Caco-2 (cell line): ENCODE measurements at regions of chr7 and their contacts with region 1.

Region 1: GRCh38 chr7:144670218-144670617 is 165.6 kb downstream of the TPK1 start:
- DNase-seq: peak in 1 of 2 experiments; percentile 11
- H3K4me3 ChIP-seq: no peak overlapping the region
- H3K4me3 Mint-ChIP-seq: no peak overlapping the region
- H3K27ac Mint-ChIP-seq: no peak overlapping the region
- H3K4me1 ChIP-seq: no peaks in the 10 kb centered on the region
- H3K4me1 Mint-ChIP-seq: peaks cover 4% of the 10 kb centered on the region
- H3K27me3 ChIP-seq: no peaks in the 10 kb centered on the region
- H3K27me3 Mint-ChIP-seq: no peaks in the 10 kb centered on the region
- CTCF ChIP-seq: peak; percentile 13 to 33

Region 2: DNA sequence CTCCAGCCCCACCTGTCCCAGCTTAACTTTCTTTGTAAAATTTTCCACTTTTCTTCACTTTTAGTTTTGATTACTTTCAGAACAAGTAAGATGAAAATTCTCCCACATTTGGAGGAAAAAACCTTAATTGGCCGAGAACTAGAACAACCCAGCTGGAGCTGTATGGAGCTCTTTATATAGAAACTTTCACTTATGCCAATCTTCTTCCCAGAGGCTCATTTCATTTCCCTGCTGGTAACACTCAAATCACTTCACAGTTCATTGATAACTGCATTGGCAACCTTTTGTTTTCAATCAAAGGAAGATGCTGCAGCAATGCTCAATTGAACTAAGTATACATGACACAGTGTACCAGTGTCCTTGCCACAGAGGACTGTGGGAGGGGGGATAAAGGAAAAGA is 90.5 kb before region 1 on chr7:
- CTCF ChIA-PET with region 1: no interaction called
- POLR2A ChIA-PET with region 1: no interaction called
- intact Hi-C with region 1: no loop called
- DNase-seq: no peak
- H3K4me3 ChIP-seq: no peak overlapping the region
- H3K4me3 Mint-ChIP-seq: no peak overlapping the region
- H3K27ac Mint-ChIP-seq: no peak overlapping the region
- H3K4me1 ChIP-seq: no peaks in the 10 kb centered on the region
- H3K4me1 Mint-ChIP-seq: no peaks in the 10 kb centered on the region
- H3K27me3 ChIP-seq: no peaks in the 10 kb centered on the region
- H3K27me3 Mint-ChIP-seq: no peaks in the 10 kb centered on the region
- CTCF ChIP-seq: no peak

Region 3: DNA sequence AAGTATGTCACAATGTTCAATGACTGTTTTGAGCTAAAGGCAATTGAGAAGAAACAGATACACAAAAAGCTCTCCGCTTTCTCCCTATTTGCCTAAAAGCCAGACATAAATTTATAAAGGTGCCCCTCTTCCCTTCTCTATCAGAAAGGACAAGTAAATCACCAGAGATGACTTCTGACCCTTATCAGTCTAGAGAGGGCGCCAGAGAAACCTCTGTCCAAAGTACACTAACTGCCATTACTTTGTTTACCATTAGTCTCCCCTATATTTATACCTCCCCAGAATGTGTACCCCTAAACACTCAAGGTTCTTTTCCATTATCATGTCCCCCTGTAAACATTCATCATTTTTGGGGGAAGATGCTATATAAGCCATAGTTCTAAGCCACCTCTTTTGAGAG is 116.3 kb after region 1 on chr7:
- CTCF ChIA-PET with region 1: interaction called, 4 read pairs
- POLR2A ChIA-PET with region 1: no interaction called
- intact Hi-C with region 1: loop called (anchors 2 kb)
- DNase-seq: no peak
- H3K4me3 ChIP-seq: no peak overlapping the region
- H3K4me3 Mint-ChIP-seq: no peak overlapping the region
- H3K27ac Mint-ChIP-seq: no peak overlapping the region
- H3K4me1 ChIP-seq: peaks cover 22% of the 10 kb centered on the region
- H3K4me1 Mint-ChIP-seq: peaks cover 6% of the 10 kb centered on the region
- H3K27me3 ChIP-seq: no peaks in the 10 kb centered on the region
- H3K27me3 Mint-ChIP-seq: no peaks in the 10 kb centered on the region
- CTCF ChIP-seq: peak; percentile 6 to 10

Region 4: GRCh38 chr7:145016068-145016467 is 345.9 kb after region 1 on chr7:
- CTCF ChIA-PET with region 1: no interaction called
- POLR2A ChIA-PET with region 1: no interaction called
- intact Hi-C with region 1: loop called (anchors 10 kb)
- DNase-seq: peak; percentile 24 to 38
- H3K4me3 ChIP-seq: no peak overlapping the region
- H3K4me3 Mint-ChIP-seq: peak overlapping the region; percentile 41
- H3K27ac Mint-ChIP-seq: no peak overlapping the region
- H3K4me1 ChIP-seq: no peaks in the 10 kb centered on the region
- H3K4me1 Mint-ChIP-seq: no peaks in the 10 kb centered on the region
- H3K27me3 ChIP-seq: no peaks in the 10 kb centered on the region
- H3K27me3 Mint-ChIP-seq: no peaks in the 10 kb centered on the region
- CTCF ChIP-seq: peak in 1 of 2 experiments; percentile 44